ENCODE measurements at regions of chr17 and their contacts with region 1.

Region 1: DNA sequence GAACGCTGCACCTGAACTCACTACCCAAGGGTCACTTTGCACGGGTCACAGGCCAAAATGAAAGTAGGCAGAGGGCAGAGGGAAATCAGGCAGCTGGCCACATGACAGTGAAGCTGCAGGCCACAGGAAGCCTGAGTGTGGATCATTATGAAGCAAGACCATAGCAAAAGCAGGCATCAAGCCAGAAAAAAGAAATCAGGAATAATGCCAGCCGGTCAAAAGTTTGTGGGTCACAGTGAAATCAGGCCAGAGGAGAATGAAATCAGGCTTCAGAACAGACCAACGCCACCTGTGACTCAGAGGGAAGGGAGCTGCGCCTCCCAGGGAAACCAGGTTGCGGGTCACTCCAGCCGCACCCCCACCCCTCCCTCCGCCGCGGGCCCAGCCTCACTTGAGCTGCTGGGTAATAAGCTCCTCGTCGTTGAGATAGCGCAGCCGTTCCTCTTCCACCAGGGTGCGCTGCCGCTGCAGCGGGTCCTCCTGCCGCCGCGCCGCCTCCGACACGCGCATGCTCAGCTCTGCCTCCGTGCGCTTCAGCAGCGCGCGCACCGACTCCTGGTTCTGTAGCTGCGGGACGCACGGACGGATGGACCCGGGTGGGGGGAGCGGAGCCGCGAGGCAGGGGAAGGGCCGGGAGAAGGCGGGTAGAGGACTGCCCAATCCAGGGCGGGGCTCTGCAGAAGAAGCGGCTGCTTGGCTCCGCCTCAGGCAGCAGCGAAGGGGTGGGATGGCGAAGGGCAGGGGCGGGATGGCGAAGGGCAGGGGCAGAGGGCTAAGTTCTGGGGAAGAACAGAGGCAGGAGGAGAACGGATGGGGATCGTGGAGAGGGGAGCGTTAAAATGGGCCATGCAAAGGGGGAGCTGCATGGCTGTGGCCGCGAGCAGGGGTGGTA is 47.7 kb downstream of the SRCIN1 start:
- DNase-seq: peak; percentile 93
- ATAC-seq: peak; percentile 76
- H3K4me3 ChIP-seq: peak overlapping the region; percentile 40 to 90 (median 66)
- H3K4me3 Mint-ChIP-seq: peak overlapping the region; percentile 99
- H3K27ac ChIP-seq: no peak overlapping the region
- H3K27ac Mint-ChIP-seq: peak overlapping the region; percentile 88
- H3K4me1 ChIP-seq: peaks cover 23 to 38% of the 10 kb centered on the region in 2 donors
- H3K4me1 Mint-ChIP-seq: peaks cover 30% of the 10 kb centered on the region
- H3K27me3 ChIP-seq: peaks cover 0 to 31% (median 20%) of the 10 kb centered on the region in 4 experiments
- H3K27me3 Mint-ChIP-seq: peaks cover 27% of the 10 kb centered on the region
- CTCF ChIP-seq: peak; percentile 92

Region 2: GRCh38 chr17:37518826-37519225 is 1039.3 kb before region 1 on chr17:
- CTCF ChIA-PET with region 1: no interaction called
- POLR2A ChIA-PET with region 1: no interaction called
- intact Hi-C with region 1: no loop called
- DNase-seq: no peak
- ATAC-seq: no peak
- H3K4me3 ChIP-seq: no peak overlapping the region
- H3K4me3 Mint-ChIP-seq: no peak overlapping the region
- H3K27ac ChIP-seq: no peak overlapping the region
- H3K27ac Mint-ChIP-seq: no peak overlapping the region
- H3K4me1 ChIP-seq: no peaks in the 10 kb centered on the region
- H3K4me1 Mint-ChIP-seq: no peaks in the 10 kb centered on the region
- H3K27me3 ChIP-seq: no peaks in the 10 kb centered on the region
- H3K27me3 Mint-ChIP-seq: no peaks in the 10 kb centered on the region
- CTCF ChIP-seq: no peak

Region 3: DNA sequence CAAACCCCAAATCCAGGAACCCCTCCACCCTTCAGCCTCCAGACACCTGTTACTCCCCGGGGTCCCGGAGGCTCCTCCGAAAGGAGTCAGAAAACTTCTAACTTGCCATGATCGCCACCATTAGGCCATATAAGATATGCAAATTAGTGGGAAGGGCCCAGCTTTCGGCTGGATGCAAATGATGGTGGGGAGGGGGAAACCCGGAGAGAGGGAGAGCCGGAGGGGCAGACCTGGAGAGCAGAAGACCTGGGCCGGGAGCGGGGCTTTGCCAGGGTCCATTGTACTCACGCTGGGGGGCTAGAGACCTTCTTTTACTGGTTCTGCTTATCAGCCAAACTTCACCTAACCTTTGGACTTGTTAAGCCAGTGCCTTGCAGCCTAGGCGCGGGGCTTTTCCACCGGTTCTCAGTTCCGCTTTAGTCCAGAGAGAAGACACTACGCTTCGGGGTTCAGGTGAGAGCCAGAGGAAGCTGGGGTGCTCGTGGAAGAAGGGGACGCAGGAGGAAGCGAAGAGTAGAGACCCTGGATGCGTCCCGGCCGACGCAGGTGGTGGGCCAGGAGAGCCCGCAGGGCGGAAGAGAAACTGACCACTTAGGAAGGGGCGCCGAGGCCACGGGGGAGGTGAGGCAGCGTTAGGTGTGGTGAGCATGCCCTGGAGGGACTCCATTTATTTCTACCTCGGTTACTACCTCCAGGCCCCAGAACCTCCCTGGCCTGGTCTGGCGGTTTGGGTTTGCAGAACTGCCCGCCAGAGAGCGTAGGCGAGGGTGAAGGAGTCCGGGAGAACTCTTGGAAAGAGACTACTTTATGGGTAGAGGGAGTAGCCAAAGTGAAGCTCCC is 812.9 kb before region 1 on chr17 and contains the start of gene HNF1B:
- CTCF ChIA-PET with region 1: no interaction called
- POLR2A ChIA-PET with region 1: no interaction called
- intact Hi-C with region 1: no loop called
- DNase-seq: peak; percentile 90
- ATAC-seq: peak; percentile 81
- H3K4me3 ChIP-seq: peak within 1 kb of the TSS; percentile 13 to 46 (median 41)
- H3K4me3 Mint-ChIP-seq: peak within 1 kb of the TSS; percentile 84
- H3K27ac ChIP-seq: no peak within 1 kb of the TSS
- H3K27ac Mint-ChIP-seq: peak within 1 kb of the TSS; percentile 73
- H3K4me1 ChIP-seq: peaks cover 51 to 62% of the 10 kb centered on the region in 2 donors
- H3K4me1 Mint-ChIP-seq: peaks cover 42% of the 10 kb centered on the region
- H3K27me3 ChIP-seq: peaks cover 0 to 84% (median 61%) of the 10 kb centered on the region in 4 experiments
- H3K27me3 Mint-ChIP-seq: peaks cover 56% of the 10 kb centered on the region
- CTCF ChIP-seq: no peak
- total RNA-seq, gene HNF1B: 1.5 and 1.6 TPM in 2 replicates

Region 4: GRCh38 chr17:38428112-38428642 is 129.9 kb before region 1 on chr17 and contains the start of gene ARHGAP23:
- CTCF ChIA-PET with region 1: interaction called, 3 read pairs
- POLR2A ChIA-PET with region 1: no interaction called
- intact Hi-C with region 1: loop called (anchors 10 kb)
- DNase-seq: peak; percentile 52
- ATAC-seq: peak; percentile 60
- H3K4me3 ChIP-seq: peak within 1 kb of the TSS; percentile 5 to 65 (median 58)
- H3K4me3 Mint-ChIP-seq: peak within 1 kb of the TSS; percentile 83
- H3K27ac ChIP-seq: peak within 1 kb of the TSS in 1 of 2 donors; percentile 9
- H3K27ac Mint-ChIP-seq: peak within 1 kb of the TSS; percentile 38
- H3K4me1 ChIP-seq: peaks cover 9 to 19% of the 10 kb centered on the region in 2 donors
- H3K4me1 Mint-ChIP-seq: peaks cover 21% of the 10 kb centered on the region
- H3K27me3 ChIP-seq: peaks cover 0 to 56% (median 23%) of the 10 kb centered on the region in 4 experiments
- H3K27me3 Mint-ChIP-seq: peaks cover 41% of the 10 kb centered on the region
- CTCF ChIP-seq: no peak
- total RNA-seq, gene ARHGAP23: 0.12 and 0.83 TPM in 2 replicates

Region 5: DNA sequence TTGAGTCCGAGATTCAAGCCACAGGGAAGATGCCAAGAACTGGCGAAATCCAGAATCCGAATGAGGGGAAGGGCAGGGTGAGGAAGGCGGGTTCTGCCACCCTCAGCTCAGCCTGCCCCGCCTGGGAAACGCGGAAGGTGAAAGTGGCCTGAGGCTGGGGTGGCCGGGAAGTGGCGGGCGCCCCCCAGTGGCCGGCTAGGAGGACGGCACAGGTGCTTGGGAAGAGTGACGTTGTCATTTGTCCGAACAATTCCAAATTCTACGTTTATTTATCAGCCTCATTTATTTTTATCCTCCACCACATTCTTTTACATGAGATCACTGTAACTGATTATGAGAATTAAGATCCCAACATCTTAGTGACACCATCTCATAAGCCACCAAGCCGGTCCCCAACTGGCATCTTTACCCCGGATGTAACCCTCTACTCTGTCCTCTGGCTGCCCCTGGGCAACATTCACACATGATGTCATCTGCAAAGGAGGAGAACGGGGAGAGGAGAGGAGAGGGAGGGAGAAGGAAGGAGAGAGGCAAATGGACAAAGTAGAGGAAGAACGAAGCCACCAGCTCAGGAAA is 26.4 kb after region 1 on chr17:
- CTCF ChIA-PET with region 1: interaction called, 196 read pairs
- POLR2A ChIA-PET with region 1: no interaction called
- intact Hi-C with region 1: loop called (anchors 1 kb)
- DNase-seq: peak; percentile 74
- ATAC-seq: peak; percentile 82
- H3K4me3 ChIP-seq: no peak overlapping the region
- H3K4me3 Mint-ChIP-seq: no peak overlapping the region
- H3K27ac ChIP-seq: no peak overlapping the region
- H3K27ac Mint-ChIP-seq: no peak overlapping the region
- H3K4me1 ChIP-seq: peaks cover 14 to 15% of the 10 kb centered on the region in 2 donors
- H3K4me1 Mint-ChIP-seq: peaks cover 2% of the 10 kb centered on the region
- H3K27me3 ChIP-seq: peaks cover 0 to 81% (median 31%) of the 10 kb centered on the region in 4 experiments
- H3K27me3 Mint-ChIP-seq: peaks cover 58% of the 10 kb centered on the region
- CTCF ChIP-seq: peak; percentile 95

Region 6: GRCh38 chr17:38605888-38606645 is 48.0 kb after region 1 on chr17 and contains the start of gene SRCIN1:
- CTCF ChIA-PET with region 1: interaction called, 27 read pairs
- POLR2A ChIA-PET with region 1: interaction called, 3 read pairs
- intact Hi-C with region 1: loop called (anchors 1 kb)
- DNase-seq: peak; percentile 66
- ATAC-seq: peak; percentile 47
- H3K4me3 ChIP-seq: peak within 1 kb of the TSS in 4 of 5 experiments; percentile 33 to 71 (median 55)
- H3K4me3 Mint-ChIP-seq: peak within 1 kb of the TSS; percentile 81
- H3K27ac ChIP-seq: no peak within 1 kb of the TSS
- H3K27ac Mint-ChIP-seq: no peak within 1 kb of the TSS
- H3K4me1 ChIP-seq: peaks cover 10 to 34% of the 10 kb centered on the region in 2 donors
- H3K4me1 Mint-ChIP-seq: peaks cover 18% of the 10 kb centered on the region
- H3K27me3 ChIP-seq: peaks cover 0 to 84% (median 43%) of the 10 kb centered on the region in 4 experiments
- H3K27me3 Mint-ChIP-seq: peaks cover 55% of the 10 kb centered on the region
- CTCF ChIP-seq: peak; percentile 89
- total RNA-seq, gene SRCIN1: 0.44 and 0.66 TPM in 2 replicates

Region 7: GRCh38 chr17:38674749-38675615 is 116.9 kb after region 1 on chr17 and contains the start of gene EPOP:
- CTCF ChIA-PET with region 1: interaction called, 161 read pairs
- POLR2A ChIA-PET with region 1: no interaction called
- intact Hi-C with region 1: loop called (anchors 2 kb)
- DNase-seq: peak; percentile 85
- ATAC-seq: peak; percentile 85
- H3K4me3 ChIP-seq: peak within 1 kb of the TSS; percentile 16 to 68 (median 56)
- H3K4me3 Mint-ChIP-seq: peak within 1 kb of the TSS; percentile 87
- H3K27ac ChIP-seq: no peak within 1 kb of the TSS
- H3K27ac Mint-ChIP-seq: peak within 1 kb of the TSS; percentile 63
- H3K4me1 ChIP-seq: peaks cover 27 to 40% of the 10 kb centered on the region in 2 donors
- H3K4me1 Mint-ChIP-seq: peaks cover 29% of the 10 kb centered on the region
- H3K27me3 ChIP-seq: peaks cover 0 to 52% (median 26%) of the 10 kb centered on the region in 4 experiments
- H3K27me3 Mint-ChIP-seq: peaks cover 38% of the 10 kb centered on the region
- CTCF ChIP-seq: no peak
- total RNA-seq, gene EPOP: 0.97 and 1.2 TPM in 2 replicates